GM10248 (cell line): ENCODE measurements at regions of chr5 and their contacts with region 1.

Region 1: GRCh38 chr5:111278845-111279504 is 54.8 kb downstream of the CAMK4 start:
- DNase-seq: peak; percentile 56
- CTCF ChIP-seq: peak; percentile 69

Region 2: DNA sequence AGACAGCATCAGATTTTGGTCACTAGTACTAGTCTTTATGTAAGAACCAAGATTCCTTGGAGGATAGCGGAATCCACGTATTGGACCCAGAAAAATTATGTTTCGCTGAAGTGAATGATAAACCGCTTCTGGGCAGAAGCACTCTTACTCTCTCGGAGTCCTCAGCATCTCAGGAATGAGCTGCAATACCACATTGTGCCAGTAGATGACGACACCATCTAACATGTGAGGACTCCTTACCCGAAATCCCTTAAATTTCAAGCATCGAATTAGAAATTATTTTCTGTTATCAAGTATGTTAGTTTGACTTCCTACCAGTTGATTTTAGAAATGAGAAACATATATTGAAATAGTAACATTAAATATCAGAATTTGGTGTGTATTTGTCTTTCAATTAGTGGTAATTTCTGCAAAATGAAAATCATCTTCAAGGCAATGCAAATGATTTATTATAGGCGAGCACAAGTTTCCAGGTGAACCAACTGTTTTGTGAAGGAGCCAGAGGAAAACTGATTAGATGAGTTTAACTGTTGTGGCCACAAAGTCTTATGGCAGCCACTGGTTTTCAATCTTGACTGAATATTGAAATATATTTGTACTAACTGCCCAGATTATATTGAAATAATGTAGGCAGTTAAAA is 120.8 kb before region 1 on chr5:
- CTCF ChIA-PET with region 1: interaction called, 92 read pairs
- POLR2A ChIA-PET with region 1: no interaction called
- DNase-seq: peak; percentile 55
- CTCF ChIP-seq: peak; percentile 97

Region 3: DNA sequence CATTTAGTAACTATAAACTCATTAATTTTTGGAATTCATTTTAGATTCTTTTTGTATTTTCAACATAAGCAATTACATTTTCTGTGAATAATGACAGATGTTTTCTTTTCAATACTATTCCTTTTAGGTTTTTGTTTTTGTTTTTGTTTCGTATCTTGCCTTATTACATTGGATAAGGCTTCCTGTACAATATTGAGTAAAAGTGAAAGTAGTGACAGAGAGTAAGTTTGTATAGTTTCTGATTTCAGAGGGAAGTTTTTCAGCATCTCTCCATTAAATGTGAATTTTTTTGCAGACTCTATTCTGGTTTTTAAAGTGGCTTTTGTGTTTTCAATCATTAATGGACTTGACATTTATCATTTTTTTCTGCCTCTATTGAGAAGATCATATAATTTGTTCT is 67.6 kb before region 1 on chr5:
- CTCF ChIA-PET with region 1: interaction called, 10 read pairs
- POLR2A ChIA-PET with region 1: no interaction called
- DNase-seq: no peak
- CTCF ChIP-seq: no peak

Region 4: DNA sequence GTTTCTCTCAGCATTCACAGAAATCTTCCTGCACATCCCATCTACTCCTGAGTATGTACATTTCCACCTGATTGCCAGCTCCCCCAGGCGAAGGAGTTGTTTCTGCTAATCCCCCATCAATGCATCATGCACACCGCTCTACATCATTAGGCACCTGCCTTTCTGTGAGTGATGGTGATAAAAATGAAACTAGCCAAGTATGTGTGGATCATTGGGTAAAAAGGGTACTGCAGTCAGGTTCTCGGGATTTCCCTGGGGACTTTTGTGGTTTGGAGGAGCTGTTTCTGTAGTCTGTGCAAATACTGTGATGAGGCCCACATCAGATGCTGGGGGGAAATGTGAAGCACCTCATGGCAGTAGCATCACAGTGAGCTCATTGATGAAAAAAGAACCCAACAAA is 24.4 kb before region 1 on chr5:
- CTCF ChIA-PET with region 1: interaction called, 32 read pairs
- POLR2A ChIA-PET with region 1: no interaction called
- DNase-seq: peak; percentile 64
- CTCF ChIP-seq: no peak

Region 5: DNA sequence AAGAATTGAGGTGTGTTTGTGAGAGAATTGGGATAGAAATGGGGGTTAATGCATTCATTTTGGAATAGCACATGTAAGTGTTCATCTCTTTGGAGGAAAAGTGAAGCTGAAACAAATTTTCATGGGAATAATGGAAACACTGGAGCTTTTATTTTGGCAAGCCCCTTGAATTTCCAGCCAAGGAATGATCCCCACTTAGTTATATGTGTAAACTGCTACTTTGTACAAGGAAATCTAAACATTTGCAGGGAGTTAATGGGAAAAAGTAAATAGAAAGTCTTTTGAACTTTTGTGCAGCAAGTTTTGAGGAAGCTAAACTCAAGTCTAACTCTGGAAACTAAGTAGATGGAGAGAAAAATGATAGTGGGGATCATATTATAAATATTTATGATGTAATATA is 10.7 kb before region 1 on chr5:
- CTCF ChIA-PET with region 1: interaction called, 23 read pairs
- POLR2A ChIA-PET with region 1: no interaction called
- DNase-seq: no peak
- CTCF ChIP-seq: no peak